Left ventricle myocardium inferior (tissue), 1 donor: ENCODE measurements at regions of chr11 and their contacts with region 1.

Region 1: GRCh38 chr11:75241036-75241905 is 697 bp downstream of the TPBGL start:
- DNase-seq: peak; percentile 83
- H3K4me3 ChIP-seq: peak overlapping the region; percentile 61
- H3K27ac ChIP-seq: no peak overlapping the region
- H3K4me1 ChIP-seq: peaks cover 19% of the 10 kb centered on the region
- H3K27me3 ChIP-seq: peaks cover 87% of the 10 kb centered on the region
- CTCF ChIP-seq: peak; percentile 95

Region 2: GRCh38 chr11:75022759-75023396 is 218.4 kb before region 1 on chr11:
- intact Hi-C with region 1: loop called (anchors 10 kb)
- DNase-seq: peak; percentile 77
- H3K4me3 ChIP-seq: no peak overlapping the region
- H3K27ac ChIP-seq: peak overlapping the region; percentile 49
- H3K4me1 ChIP-seq: peaks cover 17% of the 10 kb centered on the region
- H3K27me3 ChIP-seq: no peaks in the 10 kb centered on the region
- CTCF ChIP-seq: peak; percentile 96